Ascending aorta (tissue), 2 donors: ENCODE measurements at regions of chr9 and their contacts with region 1.

Region 1: GRCh38 chr9:4077499-4078102 is 222.3 kb downstream of the GLIS3 start:
- DNase-seq: peak; percentile 29 to 92
- H3K4me3 ChIP-seq: no peak overlapping the region
- H3K27ac ChIP-seq: peak overlapping the region in 1 of 2 donors; percentile 49
- H3K4me1 ChIP-seq: peaks cover 3 to 4% of the 10 kb centered on the region in 2 donors
- H3K27me3 ChIP-seq: no peaks in the 10 kb centered on the region
- CTCF ChIP-seq: peak; percentile 49 to 75 (median 67)

Region 2: DNA sequence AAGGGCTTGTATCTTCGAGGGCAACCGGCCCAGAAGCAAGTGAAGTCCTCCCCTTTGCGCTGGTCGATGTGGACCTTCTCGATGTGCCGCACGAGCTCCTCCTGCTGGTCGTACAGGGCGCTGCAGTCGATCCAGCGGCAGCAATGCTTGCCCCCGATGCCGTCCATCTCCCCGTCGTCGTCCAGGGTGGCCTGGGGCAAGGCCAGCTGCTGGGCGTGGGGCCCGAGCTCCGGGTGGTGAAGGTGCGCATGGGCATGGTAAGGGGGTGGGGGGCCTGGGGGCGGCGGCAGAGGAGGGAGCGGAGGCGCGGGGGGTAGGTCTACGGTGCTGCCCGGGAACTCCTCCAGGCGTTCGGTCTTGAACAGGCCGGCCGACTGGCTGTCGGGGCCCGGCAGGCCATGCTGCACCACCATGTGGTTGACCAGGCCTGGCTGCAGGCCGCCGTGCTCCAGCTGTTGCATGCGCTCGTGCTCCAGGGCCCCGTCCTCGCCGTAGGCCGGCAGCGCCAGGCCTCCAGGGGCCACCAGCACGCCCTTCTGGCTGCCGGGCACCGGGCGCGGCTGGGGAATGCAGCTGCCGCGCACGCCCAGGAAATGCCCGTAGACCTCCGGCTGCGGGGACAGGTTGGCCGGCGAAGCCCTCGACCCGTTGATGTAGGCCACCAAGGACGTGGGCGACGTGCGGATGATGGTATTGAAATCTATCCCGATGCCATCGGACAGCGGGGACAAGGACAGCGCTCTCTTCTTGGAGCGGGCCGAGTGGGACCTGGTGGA is 40.4 kb after region 1 on chr9:
- intact Hi-C with region 1: loop called (anchors 2 kb)
- DNase-seq: no peak
- H3K4me3 ChIP-seq: no peak overlapping the region
- H3K27ac ChIP-seq: peak overlapping the region; percentile 16 to 62
- H3K4me1 ChIP-seq: peaks cover 0 to 35% of the 10 kb centered on the region in 2 donors
- H3K27me3 ChIP-seq: no peaks in the 10 kb centered on the region
- CTCF ChIP-seq: peak in 2 of 3 experiments; percentile 15 to 25

Region 3: DNA sequence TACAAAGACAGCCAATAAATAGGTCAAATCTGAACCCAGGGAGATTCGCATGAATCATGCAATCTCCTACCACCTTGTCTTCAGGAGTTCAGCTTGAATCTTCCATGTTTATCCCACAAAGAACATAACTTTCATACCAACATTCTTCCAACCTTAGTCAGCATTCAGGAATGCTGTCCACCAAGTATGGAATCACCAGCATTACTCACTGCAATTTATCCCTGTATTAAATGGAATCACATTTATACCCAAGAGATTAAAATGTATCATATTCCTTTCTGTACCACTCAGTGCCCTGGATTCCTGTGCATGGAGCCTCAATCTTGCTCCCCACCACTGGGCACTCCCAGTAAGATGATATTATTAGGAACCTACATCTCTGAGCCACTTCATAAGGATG is 59.6 kb after region 1 on chr9:
- intact Hi-C with region 1: no loop called
- DNase-seq: no peak
- H3K4me3 ChIP-seq: no peak overlapping the region
- H3K27ac ChIP-seq: no peak overlapping the region
- H3K4me1 ChIP-seq: peaks cover 3 to 6% of the 10 kb centered on the region in 2 donors
- H3K27me3 ChIP-seq: no peaks in the 10 kb centered on the region
- CTCF ChIP-seq: no peak

Region 4: GRCh38 chr9:4228606-4229005 is 151.0 kb after region 1 on chr9:
- intact Hi-C with region 1: loop called (anchors 5 kb)
- DNase-seq: no peak
- H3K4me3 ChIP-seq: no peak overlapping the region
- H3K27ac ChIP-seq: no peak overlapping the region
- H3K4me1 ChIP-seq: no peaks in the 10 kb centered on the region
- H3K27me3 ChIP-seq: no peaks in the 10 kb centered on the region
- CTCF ChIP-seq: peak in 2 of 3 experiments; percentile 33 to 59

Region 5: DNA sequence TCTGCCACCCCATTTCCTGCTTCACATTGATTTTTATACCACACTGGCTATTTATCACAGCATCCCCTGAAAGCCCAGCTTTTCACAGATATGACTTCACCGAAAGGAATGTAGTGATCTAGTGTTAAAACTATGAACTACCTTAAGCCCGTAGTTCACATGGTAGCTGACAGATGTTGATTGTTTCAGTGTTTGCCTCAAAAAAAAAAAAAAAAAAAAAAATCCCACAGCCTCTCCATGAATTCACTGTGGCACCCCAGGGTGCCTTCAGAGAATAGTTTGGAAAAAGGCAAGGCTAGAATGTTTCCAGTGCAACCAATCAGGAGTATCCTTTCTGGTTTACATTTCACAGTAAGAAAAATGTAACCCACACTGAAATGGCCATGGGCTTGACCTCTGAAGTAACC is 185.1 kb after region 1 on chr9:
- intact Hi-C with region 1: loop called (anchors 5 kb)
- DNase-seq: no peak
- H3K4me3 ChIP-seq: no peak overlapping the region
- H3K27ac ChIP-seq: no peak overlapping the region
- H3K4me1 ChIP-seq: no peaks in the 10 kb centered on the region
- H3K27me3 ChIP-seq: no peaks in the 10 kb centered on the region
- CTCF ChIP-seq: no peak